GM13977 (cell line): ENCODE measurements at regions of chr6 and their contacts with region 1.

Region 1: GRCh38 chr6:63764318-63764916 is 128.8 kb downstream of the PHF3 start:
- DNase-seq: no peak
- CTCF ChIP-seq: peak; percentile 41

Region 2: GRCh38 chr6:63066055-63066704 is 698.2 kb before region 1 on chr6:
- in situ Hi-C with region 1: no loop called
- DNase-seq: peak; percentile 21
- CTCF ChIP-seq: peak; percentile 47

Region 3: DNA sequence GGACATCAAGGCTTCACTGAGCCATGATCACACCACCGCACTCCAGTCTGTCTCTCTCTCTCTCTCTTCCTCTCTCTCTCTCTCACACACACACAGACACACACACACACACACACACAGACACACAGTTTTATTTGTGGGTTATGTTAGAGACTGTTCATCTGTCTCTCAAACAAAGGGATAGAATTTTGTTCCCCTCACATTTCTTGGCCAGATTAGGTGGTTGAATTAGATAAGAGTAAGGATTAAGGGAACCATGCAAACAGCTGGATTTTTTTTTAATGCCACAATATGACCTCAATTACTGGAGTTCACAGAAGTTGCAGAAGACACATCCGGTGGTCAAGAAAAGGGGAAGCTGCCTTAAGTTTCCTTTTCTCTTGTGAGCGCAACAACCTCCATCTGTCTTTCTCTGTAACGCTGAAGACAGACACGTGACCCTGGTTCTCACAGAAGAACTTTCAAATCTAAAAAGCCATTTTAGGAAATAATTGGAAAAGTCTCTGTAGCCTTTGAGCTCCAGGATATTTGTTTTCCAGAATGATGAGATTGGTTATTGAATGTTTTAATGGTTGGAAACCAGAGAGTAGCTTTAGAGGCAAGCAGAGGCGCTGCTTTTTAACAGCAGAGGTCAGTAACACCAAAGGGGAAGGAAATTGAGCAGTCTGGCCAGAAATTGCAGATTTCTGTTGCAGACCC is 411.7 kb before region 1 on chr6:
- in situ Hi-C with region 1: loop called (anchors 10 kb)
- DNase-seq: peak; percentile 43
- CTCF ChIP-seq: peak; percentile 80

Region 4: DNA sequence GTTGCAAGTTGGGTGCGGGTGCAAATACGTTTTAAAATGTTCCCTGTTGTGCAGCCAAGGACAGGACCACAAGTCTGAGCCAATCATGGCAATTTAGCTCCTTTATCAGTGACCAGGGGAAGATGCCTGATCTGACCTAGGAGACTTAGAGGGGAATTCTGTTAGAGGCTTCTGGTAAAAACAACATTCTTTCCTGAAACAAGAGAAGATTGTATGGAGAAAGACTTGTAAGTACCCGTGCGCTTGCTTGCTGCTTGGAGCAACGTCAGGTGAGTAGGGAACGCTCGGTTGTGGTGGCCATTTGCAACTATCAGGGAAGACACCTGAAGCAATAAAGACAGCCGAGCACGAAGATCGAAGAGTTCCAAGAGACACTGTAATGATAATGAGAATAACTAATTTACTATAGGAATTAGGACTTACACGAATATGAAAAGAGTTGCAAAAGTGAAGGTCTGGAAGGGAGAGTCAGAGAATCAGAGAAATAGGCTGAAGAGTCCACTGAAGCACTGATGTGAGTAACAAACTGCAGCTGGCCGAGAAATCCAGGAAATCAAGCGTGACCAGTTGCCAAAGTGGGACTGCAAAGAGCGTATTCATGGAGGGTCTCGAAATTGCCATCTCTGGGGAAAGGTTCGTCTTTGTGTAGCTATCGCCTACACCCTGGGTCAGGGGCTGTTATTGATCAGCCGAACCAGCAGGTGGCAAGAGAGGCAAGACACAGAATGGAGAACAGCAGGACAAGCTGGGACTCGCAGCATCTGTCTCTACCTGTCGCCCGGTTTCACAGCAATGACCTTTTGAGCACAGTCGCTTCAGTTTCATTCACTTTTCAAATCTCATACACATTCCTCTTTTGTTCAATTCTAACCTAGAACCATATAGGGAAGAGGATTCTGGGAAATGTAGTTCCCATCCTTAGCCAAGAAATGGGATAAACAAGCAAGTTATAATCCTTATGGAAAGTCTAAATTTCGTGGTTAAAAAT is 166.1 kb before region 1 on chr6:
- in situ Hi-C with region 1: loop called (anchors 10 kb)
- DNase-seq: peak; percentile 76
- CTCF ChIP-seq: peak; percentile 89